Panc1 (cell line): ENCODE measurements at regions of chr4 and their contacts with region 1.

Region 1: GRCh38 chr4:4480685-4481398 is 61.0 kb downstream of the STX18 start:
- DNase-seq: no peak
- ATAC-seq: no peak
- H3K4me3 ChIP-seq: no peak overlapping the region
- H3K27ac ChIP-seq: no peak overlapping the region
- H3K4me1 ChIP-seq: no peaks in the 10 kb centered on the region
- H3K27me3 ChIP-seq: no peaks in the 10 kb centered on the region
- CTCF ChIP-seq: peak; percentile 55

Region 2: DNA sequence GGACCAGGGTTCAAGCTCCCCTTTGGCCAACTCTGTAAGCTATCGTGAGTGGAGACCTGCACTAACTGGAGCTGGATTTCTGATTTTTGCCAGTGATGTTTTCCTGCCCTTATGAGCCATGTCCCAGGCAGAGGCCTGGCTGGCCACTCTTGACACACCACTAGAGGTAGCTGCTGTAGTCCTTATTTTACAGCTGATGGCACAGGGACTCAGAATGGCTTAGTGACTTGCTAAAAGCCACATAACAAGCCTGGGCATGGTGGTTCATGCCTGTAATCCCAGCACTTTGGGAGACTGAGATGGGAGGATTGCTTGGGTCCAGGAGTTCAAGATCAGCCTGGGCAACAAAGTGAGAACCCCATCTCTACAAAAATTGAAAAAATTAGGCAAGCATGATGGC is 505.0 kb after region 1 on chr4:
- CTCF ChIA-PET with region 1: no interaction called
- POLR2A ChIA-PET with region 1: no interaction called
- in situ Hi-C with region 1: no loop called
- intact Hi-C with region 1: loop called (anchors 5 kb)
- DNase-seq: no peak
- ATAC-seq: peak; percentile 92
- H3K4me3 ChIP-seq: no peak overlapping the region
- H3K27ac ChIP-seq: no peak overlapping the region
- H3K4me1 ChIP-seq: peaks cover 1% of the 10 kb centered on the region
- H3K27me3 ChIP-seq: no peaks in the 10 kb centered on the region
- CTCF ChIP-seq: peak; percentile 56